ENCODE measurements at regions of chr7 and their contacts with region 1.

Region 1: GRCh38 chr7:37942934-37943610 is 22.6 kb downstream of the EPDR1 start:
- DNase-seq: peak; percentile 67
- H3K4me3 Mint-ChIP-seq: peak overlapping the region; percentile 40
- H3K27ac Mint-ChIP-seq: peak overlapping the region; percentile 79
- H3K4me1 Mint-ChIP-seq: peaks cover 46% of the 10 kb centered on the region
- H3K27me3 Mint-ChIP-seq: no peaks in the 10 kb centered on the region
- CTCF ChIP-seq: no peak

Region 2: DNA sequence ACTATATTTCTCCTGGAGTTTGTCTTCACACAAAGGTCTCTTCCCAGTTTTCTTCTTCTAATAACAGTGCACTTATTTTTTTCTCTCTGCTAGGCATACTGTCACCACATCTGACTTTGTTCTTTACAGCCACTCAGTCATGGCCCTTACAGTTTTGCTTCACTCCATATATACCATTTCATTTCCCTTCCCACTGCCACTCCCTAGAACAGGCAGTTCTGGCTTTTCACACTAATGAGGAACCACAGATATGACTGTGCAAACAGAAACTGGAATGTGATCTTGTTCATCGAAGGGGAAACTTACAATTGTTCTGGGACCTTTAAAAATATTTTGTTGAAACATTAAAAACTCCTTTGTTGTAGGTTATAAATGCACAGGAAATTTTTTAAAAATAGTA is 44.7 kb after region 1 on chr7:
- CTCF ChIA-PET with region 1: no interaction called
- intact Hi-C with region 1: loop called (anchors 5 kb)
- DNase-seq: peak; percentile 55
- H3K4me3 Mint-ChIP-seq: peak overlapping the region; percentile 2
- H3K27ac Mint-ChIP-seq: peak overlapping the region; percentile 9
- H3K4me1 Mint-ChIP-seq: peaks cover 51% of the 10 kb centered on the region
- H3K27me3 Mint-ChIP-seq: no peaks in the 10 kb centered on the region
- CTCF ChIP-seq: no peak